ENCODE measurements at regions of chr6 and their contacts with region 1.

Region 1: DNA sequence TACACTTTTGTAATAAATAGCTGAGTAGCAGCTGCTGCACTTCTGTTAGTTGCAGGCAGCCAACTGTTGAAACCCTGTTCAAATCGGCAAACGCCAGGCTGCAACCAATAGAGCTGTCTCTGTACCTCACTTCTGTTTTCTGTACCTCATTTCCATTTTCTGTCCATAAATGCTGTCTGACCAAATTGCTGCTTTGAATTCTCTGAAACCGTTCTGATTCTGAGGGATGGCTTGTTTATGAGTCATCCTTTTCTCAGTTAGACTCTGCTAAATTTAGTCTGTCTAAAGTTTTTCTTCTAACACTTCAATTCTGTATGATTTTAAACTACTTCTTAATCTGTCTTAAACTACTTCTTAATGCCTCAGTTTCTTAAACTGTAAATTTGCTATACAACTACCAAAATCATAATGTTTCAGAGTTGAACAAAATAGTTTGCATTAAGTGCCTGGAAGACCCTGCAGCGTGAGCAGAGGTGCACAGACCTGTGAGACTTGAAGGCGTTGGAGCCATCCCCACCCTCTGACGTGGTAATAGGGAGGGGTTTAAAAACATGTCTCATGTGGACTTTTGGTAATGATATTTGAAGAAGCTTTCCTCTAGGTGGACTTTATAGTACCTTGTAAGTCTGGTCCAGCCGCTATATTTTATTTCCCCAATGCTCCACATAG is 9.6 kb downstream of the BTNL2 start:
- DNase-seq: peak; percentile 80
- H3K4me3 ChIP-seq: peak overlapping the region; percentile 22
- H3K27ac ChIP-seq: peak overlapping the region; percentile 86
- H3K4me1 ChIP-seq: peaks cover 66% of the 10 kb centered on the region
- CTCF ChIP-seq: no peak

Region 2: DNA sequence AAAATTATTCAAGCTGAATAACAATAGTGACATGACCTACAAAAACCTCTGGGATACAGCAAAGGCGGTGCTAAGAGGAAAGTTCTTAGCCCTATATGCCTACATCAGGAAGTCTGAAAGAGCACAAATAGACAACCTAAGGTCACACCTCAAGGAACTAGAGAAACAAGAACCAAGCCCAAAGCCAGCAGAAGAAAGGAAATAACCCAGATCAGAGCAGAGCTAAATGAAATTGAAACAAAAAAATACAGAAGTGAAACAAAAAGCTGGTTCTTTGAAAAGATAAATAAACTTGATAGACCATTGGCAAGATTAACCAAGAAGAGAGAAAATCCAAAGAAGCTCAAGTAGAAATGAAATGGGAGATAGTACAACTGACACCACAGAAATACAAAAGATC is 126.0 kb before region 1 on chr6:
- CTCF ChIA-PET with region 1: no interaction called
- POLR2A ChIA-PET with region 1: interaction called, 5 read pairs
- intact Hi-C with region 1: loop called (anchors 2 kb)
- DNase-seq: peak; percentile 94
- H3K4me3 ChIP-seq: peak overlapping the region; percentile 54
- H3K27ac ChIP-seq: peak overlapping the region; percentile 95
- H3K4me1 ChIP-seq: peaks cover 71% of the 10 kb centered on the region
- CTCF ChIP-seq: no peak

Region 3: DNA sequence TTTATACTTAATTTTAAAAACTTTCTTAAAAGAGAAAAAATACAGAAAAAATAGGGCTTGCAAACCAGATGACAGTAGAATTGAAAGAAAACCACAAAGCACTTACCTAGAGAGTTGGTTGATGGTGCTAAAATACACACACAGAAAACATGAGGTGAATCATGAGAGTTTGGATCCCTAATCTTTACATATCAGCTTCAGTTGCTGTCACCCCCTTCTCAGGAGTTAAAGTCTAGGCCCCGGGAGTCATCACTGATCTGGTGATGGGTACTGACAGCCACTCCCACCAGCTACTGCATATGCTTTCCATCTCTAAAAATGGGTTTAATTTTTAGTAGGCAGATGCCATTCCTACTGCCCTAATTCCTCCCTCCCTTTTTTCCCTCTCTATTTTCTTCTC is 42.4 kb before region 1 on chr6:
- CTCF ChIA-PET with region 1: no interaction called
- POLR2A ChIA-PET with region 1: no interaction called
- intact Hi-C with region 1: no loop called
- DNase-seq: no peak
- H3K4me3 ChIP-seq: no peak overlapping the region
- H3K27ac ChIP-seq: no peak overlapping the region
- H3K4me1 ChIP-seq: peaks cover 3% of the 10 kb centered on the region
- CTCF ChIP-seq: no peak

Region 4: GRCh38 chr6:32472781-32473375 is 75.5 kb after region 1 on chr6:
- CTCF ChIA-PET with region 1: no interaction called
- POLR2A ChIA-PET with region 1: no interaction called
- intact Hi-C with region 1: no loop called
- DNase-seq: no peak
- H3K4me3 ChIP-seq: peak overlapping the region; percentile 41
- H3K27ac ChIP-seq: peak overlapping the region; percentile 43
- H3K4me1 ChIP-seq: peaks cover 17% of the 10 kb centered on the region
- CTCF ChIP-seq: no peak

Region 5: GRCh38 chr6:34027445-34027936 is 1630.1 kb after region 1 on chr6:
- CTCF ChIA-PET with region 1: no interaction called
- POLR2A ChIA-PET with region 1: no interaction called
- intact Hi-C with region 1: no loop called
- DNase-seq: peak; percentile 60
- H3K4me3 ChIP-seq: no peak overlapping the region
- H3K27ac ChIP-seq: no peak overlapping the region
- H3K4me1 ChIP-seq: peaks cover 25% of the 10 kb centered on the region
- CTCF ChIP-seq: peak; percentile 80

Measured in OCI-LY7 (cell line).